Esophagus muscularis mucosa (tissue), 4 donors: ENCODE measurements at regions of chr2 and their contacts with region 1.

Region 1: GRCh38 chr2:69816923-69817542 is 12.4 kb upstream of the GMCL1 start:
- DNase-seq: peak; percentile 97
- H3K4me3 ChIP-seq: no peak overlapping the region
- H3K27ac ChIP-seq: no peak overlapping the region
- H3K4me1 ChIP-seq: peaks cover 0 to 12% (median 5%) of the 10 kb centered on the region in 4 donors
- H3K27me3 ChIP-seq: no peaks in the 10 kb centered on the region
- CTCF ChIP-seq: peak; percentile 95 to 99 (median 95)
- EP300 ChIP-seq: no peak
- POLR2A ChIP-seq: no peak

Region 2: DNA sequence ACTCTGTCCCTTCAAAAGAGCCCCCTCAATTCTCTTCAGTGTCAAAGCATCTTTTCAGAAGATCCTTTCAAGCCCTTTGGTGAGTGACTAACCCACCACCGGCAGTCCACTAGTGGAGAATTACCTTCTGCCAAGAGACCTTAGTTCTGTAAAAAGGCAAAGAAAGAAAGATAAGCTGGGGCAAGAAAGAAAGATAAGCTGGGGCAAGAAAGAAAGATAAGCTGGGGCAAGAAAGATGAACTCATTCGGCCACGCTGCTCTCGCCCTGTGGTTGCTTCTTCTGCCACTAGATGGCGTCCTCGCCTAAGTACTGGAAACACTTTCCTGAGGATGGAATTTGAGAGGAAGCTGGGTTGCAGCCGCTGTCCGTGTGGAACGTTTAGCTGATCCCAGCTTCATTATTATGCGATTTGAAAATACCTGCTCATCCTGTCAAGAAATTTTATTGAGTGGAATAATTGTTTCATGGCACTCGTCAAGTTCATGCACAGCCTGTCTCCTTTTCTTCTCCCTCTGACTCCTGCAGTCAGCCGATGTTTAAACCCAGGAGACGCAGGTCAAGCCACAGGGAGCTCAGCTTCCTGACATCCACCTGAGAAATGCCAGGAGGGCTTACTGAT is 92.4 kb before region 1 on chr2:
- intact Hi-C with region 1: loop called (anchors 2 kb)
- DNase-seq: peak; percentile 96
- H3K4me3 ChIP-seq: peak overlapping the region; percentile 31 to 51 (median 36)
- H3K27ac ChIP-seq: no peak overlapping the region
- H3K4me1 ChIP-seq: peaks cover 3 to 7% (median 4%) of the 10 kb centered on the region in 4 donors
- H3K27me3 ChIP-seq: no peaks in the 10 kb centered on the region
- CTCF ChIP-seq: peak; percentile 96 to 99 (median 97)
- EP300 ChIP-seq: no peak
- POLR2A ChIP-seq: no peak

Region 3: GRCh38 chr2:69741619-69742466 is 75.2 kb before region 1 on chr2 and contains the start of gene ANXA4:
- intact Hi-C with region 1: loop called (anchors 5 kb)
- DNase-seq: peak; percentile 95
- H3K4me3 ChIP-seq: peak within 1 kb of the TSS; percentile 80 to 96 (median 86)
- H3K27ac ChIP-seq: peak within 1 kb of the TSS; percentile 86 to 98 (median 90)
- H3K4me1 ChIP-seq: peaks cover 10 to 40% (median 32%) of the 10 kb centered on the region in 4 donors
- H3K27me3 ChIP-seq: no peaks in the 10 kb centered on the region
- CTCF ChIP-seq: no peak
- EP300 ChIP-seq: no peak
- POLR2A ChIP-seq: peak; percentile 72
- total RNA-seq, gene ANXA4: 44.9 to 94.8 (median 58.5) TPM